ENCODE measurements at regions of chr20 and their contacts with region 1.

Region 1: DNA sequence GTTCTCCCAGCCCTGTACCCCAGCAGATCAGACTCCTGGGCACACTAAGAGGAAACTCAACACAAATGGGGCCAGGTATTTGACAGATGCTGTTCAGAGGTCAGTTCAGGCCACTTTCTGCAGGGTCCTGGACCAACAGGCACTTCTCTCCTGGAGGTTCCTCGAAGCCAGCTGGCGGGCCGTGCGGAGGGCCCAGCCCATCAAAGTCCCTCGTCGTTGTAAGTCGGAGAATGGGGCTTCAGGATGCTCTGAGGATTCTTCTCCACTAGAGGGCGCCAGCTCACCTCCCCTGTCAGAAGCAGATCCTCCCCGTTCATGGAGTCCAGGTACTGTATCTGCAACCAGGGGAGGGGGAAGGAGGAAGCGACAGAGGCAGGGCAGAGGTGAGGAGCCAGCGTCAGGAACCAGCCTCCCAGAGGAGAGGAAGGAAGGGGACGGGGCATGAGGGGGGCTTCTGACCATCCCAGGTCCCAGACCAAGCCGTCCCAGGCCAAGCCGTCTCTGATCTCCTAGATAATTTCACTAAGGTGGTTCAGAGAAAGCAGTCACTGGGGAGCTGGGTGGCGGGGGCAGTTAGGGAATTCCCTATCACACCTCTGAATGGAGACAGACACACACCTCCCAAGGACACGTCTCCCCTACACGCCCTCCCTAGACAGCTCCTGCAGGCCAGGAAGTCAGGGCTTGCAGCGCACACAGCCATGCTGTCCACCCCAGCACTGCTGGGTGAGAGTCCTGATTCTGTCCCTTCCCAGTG is 11.7 kb upstream of the FAM83C start:
- DNase-seq: peak; percentile 71
- H3K4me3 ChIP-seq: no peak overlapping the region
- H3K27ac ChIP-seq: no peak overlapping the region
- H3K4me1 ChIP-seq: peaks cover 29% of the 10 kb centered on the region
- H3K27me3 ChIP-seq: no peaks in the 10 kb centered on the region
- CTCF ChIP-seq: peak; percentile 93

Region 2: DNA sequence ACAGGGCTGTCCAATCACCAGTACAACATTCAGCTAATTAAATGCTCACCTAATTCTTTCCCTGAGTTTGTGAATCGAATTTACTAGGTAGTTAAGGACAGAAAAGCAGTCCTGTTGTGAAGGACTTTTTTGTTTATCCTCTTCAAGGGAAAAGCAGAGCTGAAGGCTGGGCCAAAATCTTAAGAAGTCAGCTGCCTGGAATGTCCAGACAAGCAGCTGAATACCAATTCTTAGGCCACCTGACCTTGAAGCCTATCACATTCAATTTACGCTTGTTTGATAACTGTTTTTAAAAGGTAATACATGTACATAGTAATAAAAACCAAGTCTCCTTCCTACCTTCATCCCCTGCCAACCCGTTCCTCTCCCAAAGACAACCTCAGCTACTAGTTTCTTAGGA is 51.5 kb after region 1 on chr20:
- intact Hi-C with region 1: no loop called
- DNase-seq: no peak
- H3K4me3 ChIP-seq: no peak overlapping the region
- H3K27ac ChIP-seq: no peak overlapping the region
- H3K4me1 ChIP-seq: peaks cover 10% of the 10 kb centered on the region
- H3K27me3 ChIP-seq: no peaks in the 10 kb centered on the region
- CTCF ChIP-seq: no peak

Region 3: GRCh38 chr20:35447082-35447789 is 143.3 kb after region 1 on chr20:
- intact Hi-C with region 1: loop called (anchors 10 kb)
- DNase-seq: peak; percentile 86
- H3K4me3 ChIP-seq: peak overlapping the region; percentile 57
- H3K27ac ChIP-seq: no peak overlapping the region
- H3K4me1 ChIP-seq: peaks cover 4% of the 10 kb centered on the region
- H3K27me3 ChIP-seq: peaks cover 2% of the 10 kb centered on the region
- CTCF ChIP-seq: peak; percentile 96